Activated CD4-positive, alpha-beta T cell treated with anti-CD3 and anti-CD28 coated beads for 36 hours (primary cell): ENCODE measurements at regions of chr3 and their contacts with region 1.

Region 1: DNA sequence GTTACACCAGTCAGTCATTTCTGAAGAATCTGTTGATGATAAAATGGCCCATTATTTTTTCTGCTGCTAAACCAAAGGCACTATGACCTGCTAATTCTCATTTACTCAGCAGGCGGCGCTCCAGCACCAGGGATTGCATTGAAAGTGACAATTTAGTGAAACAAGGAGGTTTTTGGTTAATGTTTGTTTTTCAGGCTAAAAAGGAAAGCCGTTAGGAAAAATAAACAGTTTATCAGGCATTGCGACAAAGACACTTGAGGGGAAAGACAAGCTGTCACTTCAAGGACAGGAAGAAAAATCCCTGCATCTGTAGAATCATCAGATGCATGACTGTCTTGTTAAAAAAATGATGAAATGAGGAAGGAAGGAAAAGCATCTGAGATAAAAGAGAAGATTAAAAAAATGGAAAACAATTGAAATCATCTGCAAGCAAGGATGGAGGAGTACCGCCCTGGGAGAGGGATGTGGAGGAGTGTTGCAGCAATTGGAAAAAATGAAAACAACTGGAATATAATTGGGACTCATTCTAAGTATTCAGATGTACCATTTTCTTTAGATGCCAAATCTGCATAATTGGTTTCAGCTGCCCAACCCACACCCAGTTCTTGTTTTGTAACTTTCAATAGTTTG is 54.0 kb downstream of the NR1D2 start:
- DNase-seq: peak; percentile 84
- ATAC-seq: no peak
- H3K4me3 Mint-ChIP-seq: no peak overlapping the region
- H3K27ac Mint-ChIP-seq: no peak overlapping the region
- H3K4me1 Mint-ChIP-seq: peaks cover 9% of the 10 kb centered on the region
- H3K27me3 Mint-ChIP-seq: peaks cover 9% of the 10 kb centered on the region

Region 2: GRCh38 chr3:23888617-23889228 is 110.4 kb before region 1 on chr3:
- CTCF ChIA-PET with region 1: interaction called, 3 read pairs
- POLR2A ChIA-PET with region 1: no interaction called
- intact Hi-C with region 1: loop called in 1 of 2 experiments (anchors 5 kb)
- DNase-seq: no peak
- ATAC-seq: no peak
- H3K4me3 Mint-ChIP-seq: no peak overlapping the region
- H3K27ac Mint-ChIP-seq: no peak overlapping the region
- H3K4me1 Mint-ChIP-seq: no peaks in the 10 kb centered on the region
- H3K27me3 Mint-ChIP-seq: no peaks in the 10 kb centered on the region

Region 3: GRCh38 chr3:24149032-24149431 is 149.9 kb after region 1 on chr3:
- CTCF ChIA-PET with region 1: no interaction called
- POLR2A ChIA-PET with region 1: no interaction called
- intact Hi-C with region 1: loop called (anchors 1 kb)
- DNase-seq: no peak
- ATAC-seq: no peak
- H3K4me3 Mint-ChIP-seq: no peak overlapping the region
- H3K27ac Mint-ChIP-seq: no peak overlapping the region
- H3K4me1 Mint-ChIP-seq: peaks cover 6% of the 10 kb centered on the region
- H3K27me3 Mint-ChIP-seq: peaks cover 4% of the 10 kb centered on the region

Region 4: DNA sequence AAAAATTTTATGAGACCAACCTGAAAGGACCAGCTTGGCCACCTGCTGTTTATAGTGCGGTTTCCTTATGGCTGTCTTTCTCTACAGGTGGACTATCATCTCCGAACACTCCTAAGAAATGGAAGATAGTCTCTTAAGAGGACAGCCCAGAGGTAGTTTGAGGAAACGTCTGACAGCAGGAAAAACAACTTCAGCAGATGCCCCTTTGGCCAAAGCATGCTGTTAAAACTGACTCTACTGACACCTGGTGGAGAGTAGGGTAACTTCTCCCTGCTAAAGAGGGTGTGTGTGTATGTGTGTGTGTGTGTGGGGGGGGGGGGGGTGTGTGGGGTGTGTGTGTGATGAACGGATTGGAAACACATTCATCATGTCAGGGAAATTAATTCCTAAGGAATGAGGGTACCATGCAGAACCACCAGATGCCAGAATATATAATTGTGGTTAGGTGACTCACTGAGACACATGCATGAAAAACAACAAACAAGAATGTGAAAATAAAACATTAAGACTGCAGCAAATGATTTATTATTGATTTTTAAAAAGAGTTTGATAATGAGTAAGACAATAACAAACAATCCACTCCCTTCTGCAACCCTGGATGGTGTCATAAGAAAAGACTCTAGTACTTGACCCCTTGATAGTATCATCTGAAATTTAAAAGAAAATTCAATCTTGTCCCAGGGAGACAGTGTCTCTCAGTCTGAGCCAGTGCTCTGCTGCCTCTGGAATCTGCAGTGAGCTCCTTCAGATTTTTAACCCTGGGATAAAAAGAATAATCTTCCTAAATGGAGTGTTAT is 239.0 kb after region 1 on chr3:
- CTCF ChIA-PET with region 1: interaction called, 17 read pairs
- POLR2A ChIA-PET with region 1: no interaction called
- intact Hi-C with region 1: loop called (anchors 1 kb)
- DNase-seq: peak; percentile 38
- ATAC-seq: peak; percentile 90
- H3K4me3 Mint-ChIP-seq: no peak overlapping the region
- H3K27ac Mint-ChIP-seq: no peak overlapping the region
- H3K4me1 Mint-ChIP-seq: peaks cover 3% of the 10 kb centered on the region
- H3K27me3 Mint-ChIP-seq: peaks cover 3% of the 10 kb centered on the region

Region 5: DNA sequence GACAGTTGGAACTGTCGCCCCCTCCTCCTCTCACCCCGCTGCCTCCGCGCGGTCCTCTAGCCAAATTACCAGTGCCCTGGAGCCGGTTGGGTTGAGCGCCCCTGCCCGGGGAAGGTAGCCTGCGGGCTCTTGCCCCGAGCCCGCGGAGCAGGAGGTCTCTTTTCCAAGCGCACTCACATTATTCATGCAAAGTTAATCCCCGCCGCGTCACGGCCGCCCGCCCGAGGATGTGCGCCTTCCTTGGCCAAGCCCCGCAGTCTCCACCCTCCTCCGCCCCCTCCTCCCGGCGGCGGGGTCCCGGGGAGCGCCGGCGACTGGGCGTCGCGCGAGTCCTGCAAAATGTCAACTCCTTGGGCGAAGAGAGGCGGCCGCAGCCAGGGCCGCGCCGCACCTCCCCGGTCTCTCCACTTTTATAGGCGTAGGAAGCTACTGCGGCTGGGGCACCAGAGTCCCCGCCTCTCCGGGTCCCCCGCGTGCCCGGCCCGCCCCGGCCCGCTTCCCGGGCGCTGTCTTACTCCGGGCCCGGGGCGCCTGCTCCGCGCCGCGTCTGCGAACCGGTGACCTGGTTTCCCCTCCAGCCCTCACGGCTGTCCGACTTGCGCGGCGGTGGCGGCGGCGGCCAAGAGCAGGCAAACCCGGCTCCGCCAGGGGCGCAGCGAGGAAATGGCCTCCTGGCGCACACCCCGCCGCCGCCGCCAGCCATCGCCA is 495.6 kb after region 1 on chr3 and contains the start of gene THRB:
- CTCF ChIA-PET with region 1: no interaction called
- POLR2A ChIA-PET with region 1: no interaction called
- intact Hi-C with region 1: loop called (anchors 10 kb)
- DNase-seq: peak; percentile 34
- ATAC-seq: peak; percentile 23
- H3K4me3 Mint-ChIP-seq: peak within 1 kb of the TSS; percentile 30
- H3K27ac Mint-ChIP-seq: no peak within 1 kb of the TSS
- H3K4me1 Mint-ChIP-seq: peaks cover 2% of the 10 kb centered on the region
- H3K27me3 Mint-ChIP-seq: peaks cover 51% of the 10 kb centered on the region
- total RNA-seq, gene THRB: not detected

Region 6: DNA sequence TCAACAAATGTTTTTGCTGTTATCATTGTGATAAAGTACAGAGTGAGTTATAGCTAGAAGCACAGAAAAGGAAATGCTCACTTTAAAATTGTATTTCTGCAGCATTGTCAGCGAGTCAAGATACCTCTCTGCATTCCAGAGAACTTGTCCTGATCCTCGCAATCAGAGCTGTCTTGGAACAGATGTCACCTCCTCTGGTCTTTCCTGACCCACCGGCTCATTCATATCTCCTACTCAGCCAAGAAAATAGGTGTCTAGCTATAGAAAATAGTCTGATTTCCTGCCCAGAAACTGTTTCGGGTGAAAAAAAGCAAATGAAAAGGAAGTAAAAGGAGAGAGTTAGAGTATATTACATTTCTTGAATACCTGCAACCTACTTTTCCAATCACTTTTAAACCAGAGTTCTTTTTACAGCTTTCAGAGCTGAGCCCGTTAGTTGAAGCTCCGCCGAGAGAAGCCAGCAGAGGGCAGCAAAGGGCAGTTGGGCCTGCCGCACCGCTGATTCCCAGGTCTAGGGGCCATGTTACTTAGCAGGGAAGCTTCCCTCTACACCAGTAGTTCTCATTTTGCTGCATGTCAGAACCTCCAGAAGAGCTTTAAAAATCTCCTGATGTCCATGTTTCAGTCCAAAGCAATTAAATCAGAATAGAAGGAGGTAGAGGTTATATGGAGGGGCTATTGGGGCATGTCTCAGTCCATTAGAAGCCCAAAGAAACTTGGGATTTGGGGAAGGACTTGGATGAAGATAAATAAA is 681.3 kb after region 1 on chr3:
- CTCF ChIA-PET with region 1: interaction called, 4 read pairs
- POLR2A ChIA-PET with region 1: no interaction called
- intact Hi-C with region 1: loop called (anchors 5 kb)
- DNase-seq: peak; percentile 79
- ATAC-seq: peak; percentile 69
- H3K4me3 Mint-ChIP-seq: no peak overlapping the region
- H3K27ac Mint-ChIP-seq: no peak overlapping the region
- H3K4me1 Mint-ChIP-seq: peaks cover 10% of the 10 kb centered on the region
- H3K27me3 Mint-ChIP-seq: peaks cover 60% of the 10 kb centered on the region

Region 7: GRCh38 chr3:25033407-25034029 is 1034.4 kb after region 1 on chr3:
- CTCF ChIA-PET with region 1: no interaction called
- POLR2A ChIA-PET with region 1: no interaction called
- intact Hi-C with region 1: loop called in 1 of 2 experiments (anchors 10 kb)
- DNase-seq: peak; percentile 39
- ATAC-seq: peak; percentile 39
- H3K4me3 Mint-ChIP-seq: no peak overlapping the region
- H3K27ac Mint-ChIP-seq: no peak overlapping the region
- H3K4me1 Mint-ChIP-seq: no peaks in the 10 kb centered on the region
- H3K27me3 Mint-ChIP-seq: no peaks in the 10 kb centered on the region